ENCODE measurements at regions of chr13 and their contacts with region 1.

Region 1: DNA sequence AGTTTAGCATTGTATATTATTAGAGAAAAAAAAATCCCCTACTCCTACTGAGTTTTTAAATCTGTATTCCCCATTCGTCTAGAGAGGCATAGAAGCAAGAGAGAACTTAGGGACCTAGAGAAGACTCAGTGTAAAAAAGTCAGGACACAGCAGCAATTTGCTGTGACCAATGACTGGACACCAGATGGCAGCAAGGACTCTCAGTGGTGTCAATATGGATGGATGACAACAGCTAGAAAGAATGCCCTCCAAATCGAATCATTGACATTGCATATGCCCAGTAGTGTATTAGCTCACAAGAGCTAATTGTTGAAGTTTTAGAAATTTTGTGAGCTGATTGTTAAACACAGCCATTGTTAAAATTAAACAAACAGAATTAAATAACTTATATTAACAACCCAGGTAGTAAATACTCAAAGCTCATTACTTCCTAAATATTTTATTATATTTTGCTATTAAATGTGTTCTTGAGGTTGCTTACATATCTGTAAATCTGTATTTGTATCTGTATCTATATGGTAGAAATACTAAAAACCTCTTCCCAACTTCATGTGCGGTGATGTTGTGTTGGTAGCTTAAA is 43.9 kb downstream of the SIAH3 start:
- DNase-seq: peak in 4 of 5 donors; percentile 12 to 32 (median 16)
- H3K4me3 ChIP-seq: no peak overlapping the region
- H3K4me3 Mint-ChIP-seq: no peak overlapping the region
- H3K27ac ChIP-seq: no peak overlapping the region
- H3K27ac Mint-ChIP-seq: no peak overlapping the region
- H3K4me1 ChIP-seq: no peaks in the 10 kb centered on the region
- H3K4me1 Mint-ChIP-seq: peaks cover 0 to 9% (median 5%) of the 10 kb centered on the region in 4 donors
- H3K27me3 ChIP-seq: no peaks in the 10 kb centered on the region
- H3K27me3 Mint-ChIP-seq: no peaks in the 10 kb centered on the region

Region 2: DNA sequence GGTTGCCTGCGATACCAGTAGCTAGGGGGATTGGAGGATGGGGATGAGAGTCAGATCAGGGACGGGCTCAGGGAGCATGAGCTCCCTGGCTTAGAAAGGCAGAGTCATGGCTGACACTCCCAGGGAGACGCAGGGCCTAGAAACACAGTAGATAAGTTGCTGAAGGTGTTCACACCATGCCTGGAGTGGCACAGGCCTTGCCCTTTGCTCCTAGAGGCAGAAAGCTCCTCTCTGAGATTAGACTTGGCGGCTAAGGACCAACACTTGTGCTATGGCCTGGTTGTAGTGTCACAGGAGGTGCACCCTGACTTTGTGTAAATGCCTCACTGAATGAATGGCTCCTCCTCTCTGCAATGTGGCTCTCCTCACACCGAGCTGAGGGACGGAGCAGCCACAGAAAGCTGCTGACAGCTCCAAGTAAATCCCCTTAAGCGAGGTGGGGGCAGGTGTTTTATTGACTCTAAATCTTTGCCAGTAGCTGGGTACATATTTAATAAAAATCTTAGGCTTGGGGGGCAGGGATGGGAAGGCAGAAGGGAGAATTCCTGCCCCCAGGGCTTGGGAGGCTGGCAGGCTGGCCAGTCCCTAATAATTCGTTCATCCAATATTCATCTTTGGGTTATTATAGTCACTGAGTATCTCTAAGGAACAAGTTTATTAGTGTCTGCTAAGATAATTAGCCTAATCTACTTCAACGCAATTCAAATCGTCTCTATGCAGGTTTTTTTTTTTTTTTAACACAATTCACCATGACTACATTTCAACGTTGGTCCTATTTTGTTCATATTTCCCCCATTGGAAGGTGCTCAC is 11.0 kb before region 1 on chr13:
- CTCF ChIA-PET with region 1: interaction called, 10 read pairs
- POLR2A ChIA-PET with region 1: no interaction called
- intact Hi-C with region 1: no loop called
- DNase-seq: no peak
- H3K4me3 ChIP-seq: no peak overlapping the region
- H3K4me3 Mint-ChIP-seq: no peak overlapping the region
- H3K27ac ChIP-seq: no peak overlapping the region
- H3K27ac Mint-ChIP-seq: no peak overlapping the region
- H3K4me1 ChIP-seq: no peaks in the 10 kb centered on the region
- H3K4me1 Mint-ChIP-seq: peaks cover 0 to 4% (median 3%) of the 10 kb centered on the region in 4 donors
- H3K27me3 ChIP-seq: no peaks in the 10 kb centered on the region
- H3K27me3 Mint-ChIP-seq: peaks cover 3 to 4% of the 10 kb centered on the region in 2 donors

Region 3: DNA sequence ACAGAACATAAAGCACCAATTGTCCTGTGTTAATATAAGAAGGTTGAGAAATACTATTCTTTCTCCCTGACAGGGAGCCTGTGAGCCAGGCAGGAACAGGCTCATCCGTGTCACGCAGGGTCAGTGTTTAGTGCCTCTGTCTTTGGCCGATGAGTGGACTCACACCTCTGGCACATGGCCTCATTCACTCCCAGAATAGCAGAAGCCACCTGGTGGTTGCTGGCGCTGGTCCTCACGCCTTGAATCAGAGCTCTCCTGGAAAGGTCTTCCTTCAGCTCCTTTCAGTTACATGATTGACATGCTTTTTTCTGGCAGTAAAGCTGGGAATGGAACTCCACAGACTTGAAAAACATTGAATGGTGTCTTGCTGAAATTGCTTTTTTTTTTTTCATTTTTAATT is 72.1 kb after region 1 on chr13:
- CTCF ChIA-PET with region 1: interaction called, 14 read pairs
- POLR2A ChIA-PET with region 1: no interaction called
- intact Hi-C with region 1: loop called (anchors 1 kb)
- DNase-seq: no peak
- H3K4me3 ChIP-seq: no peak overlapping the region
- H3K4me3 Mint-ChIP-seq: no peak overlapping the region
- H3K27ac ChIP-seq: no peak overlapping the region
- H3K27ac Mint-ChIP-seq: no peak overlapping the region
- H3K4me1 ChIP-seq: no peaks in the 10 kb centered on the region
- H3K4me1 Mint-ChIP-seq: no peaks in the 10 kb centered on the region
- H3K27me3 ChIP-seq: no peaks in the 10 kb centered on the region
- H3K27me3 Mint-ChIP-seq: peaks cover 6 to 16% of the 10 kb centered on the region in 2 donors

Region 4: GRCh38 chr13:45961468-45961867 is 153.9 kb after region 1 on chr13:
- CTCF ChIA-PET with region 1: no interaction called
- POLR2A ChIA-PET with region 1: no interaction called
- intact Hi-C with region 1: loop called (anchors 5 kb)
- DNase-seq: no peak
- H3K4me3 ChIP-seq: no peak overlapping the region
- H3K4me3 Mint-ChIP-seq: no peak overlapping the region
- H3K27ac ChIP-seq: no peak overlapping the region
- H3K27ac Mint-ChIP-seq: no peak overlapping the region
- H3K4me1 ChIP-seq: no peaks in the 10 kb centered on the region
- H3K4me1 Mint-ChIP-seq: peaks cover 0 to 7% (median 1%) of the 10 kb centered on the region in 4 donors
- H3K27me3 ChIP-seq: no peaks in the 10 kb centered on the region
- H3K27me3 Mint-ChIP-seq: no peaks in the 10 kb centered on the region